ENCODE measurements at regions of chr10 and their contacts with region 1.

Region 1: DNA sequence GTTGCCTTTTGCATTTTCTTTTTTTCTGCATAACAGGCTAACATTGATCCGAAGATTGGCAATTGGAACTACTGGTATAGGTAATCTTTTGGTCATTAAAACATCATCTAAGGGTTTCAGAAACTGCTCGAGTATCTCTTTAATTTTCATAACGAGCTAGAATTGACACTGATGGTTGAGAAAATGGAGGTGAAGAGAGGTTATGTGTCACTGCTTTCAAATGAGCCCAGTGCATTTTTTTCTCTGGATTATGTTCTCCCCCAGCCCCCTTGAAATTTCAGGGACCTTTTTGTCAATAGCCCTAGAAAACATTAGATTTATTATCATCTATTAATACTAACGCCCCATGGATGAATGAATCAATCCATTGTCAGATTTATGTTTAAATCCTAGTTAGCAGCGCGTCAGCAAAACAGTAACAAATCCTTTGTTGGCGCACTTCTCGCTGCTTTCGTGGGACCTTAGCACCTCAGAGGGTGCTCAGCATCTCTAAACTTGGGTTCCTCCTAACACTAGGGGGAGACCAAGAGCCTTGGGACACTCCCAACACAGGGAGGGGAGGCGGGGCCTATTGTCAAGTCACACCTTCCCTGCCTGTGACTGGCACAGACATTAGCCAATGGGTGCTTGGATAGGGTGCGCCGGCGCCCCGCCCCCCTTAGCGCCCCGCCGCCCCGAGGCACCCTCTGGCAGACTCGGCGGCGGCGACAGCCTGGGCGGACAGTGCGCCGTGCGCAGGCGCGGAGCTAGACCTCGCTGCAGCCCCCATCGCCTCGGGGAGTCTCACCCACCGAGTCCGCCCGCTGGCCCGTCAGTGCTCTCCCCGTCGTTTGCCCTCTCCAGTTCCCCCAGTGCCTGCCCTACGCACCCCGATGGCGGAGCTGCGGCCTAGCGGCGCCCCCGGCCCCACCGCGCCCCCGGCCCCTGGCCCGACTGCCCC is at the start of gene SUFU:
- DNase-seq: peak; percentile 95 to 100
- ATAC-seq: peak; percentile 76 to 90 (median 76)
- H3K4me3 ChIP-seq: peak within 1 kb of the TSS; percentile 99
- H3K4me3 Mint-ChIP-seq: no peak within 1 kb of the TSS
- H3K27ac ChIP-seq: peak within 1 kb of the TSS; percentile 90
- H3K27ac Mint-ChIP-seq: no peak within 1 kb of the TSS
- H3K4me1 ChIP-seq: peaks cover 33% of the 10 kb centered on the region
- H3K4me1 Mint-ChIP-seq: peaks cover 25% of the 10 kb centered on the region in 2 donors
- H3K27me3 ChIP-seq: no peaks in the 10 kb centered on the region
- H3K27me3 Mint-ChIP-seq: no peaks in the 10 kb centered on the region
- CTCF ChIP-seq: peak; percentile 70
- total RNA-seq, gene SUFU: 8.2 to 13.0 (median 11.5) TPM

Region 2: GRCh38 chr10:102132563-102133372 is 370.8 kb before region 1 on chr10 and contains the start of gene PPRC1:
- intact Hi-C with region 1: loop called (anchors 1 kb)
- DNase-seq: peak; percentile 94 to 98
- ATAC-seq: peak; percentile 94 to 99 (median 96)
- H3K4me3 ChIP-seq: peak within 1 kb of the TSS; percentile 96
- H3K4me3 Mint-ChIP-seq: peak within 1 kb of the TSS; percentile 98
- H3K27ac ChIP-seq: peak within 1 kb of the TSS; percentile 86
- H3K27ac Mint-ChIP-seq: peak within 1 kb of the TSS; percentile 93 to 97
- H3K4me1 ChIP-seq: peaks cover 27% of the 10 kb centered on the region
- H3K4me1 Mint-ChIP-seq: peaks cover 33 to 37% of the 10 kb centered on the region in 2 donors
- H3K27me3 ChIP-seq: no peaks in the 10 kb centered on the region
- H3K27me3 Mint-ChIP-seq: no peaks in the 10 kb centered on the region
- CTCF ChIP-seq: peak; percentile 96
- total RNA-seq, gene PPRC1: 29.1 to 48.0 (median 37.7) TPM

Region 3: GRCh38 chr10:102245101-102245931 is 258.2 kb before region 1 on chr10 and contains the start of gene GBF1:
- intact Hi-C with region 1: loop called (anchors 1 kb)
- DNase-seq: peak; percentile 88 to 97
- ATAC-seq: peak; percentile 80 to 94 (median 84)
- H3K4me3 ChIP-seq: peak within 1 kb of the TSS; percentile 94
- H3K4me3 Mint-ChIP-seq: peak within 1 kb of the TSS; percentile 98
- H3K27ac ChIP-seq: peak within 1 kb of the TSS; percentile 89
- H3K27ac Mint-ChIP-seq: peak within 1 kb of the TSS; percentile 98 to 99
- H3K4me1 ChIP-seq: peaks cover 31% of the 10 kb centered on the region
- H3K4me1 Mint-ChIP-seq: peaks cover 47 to 60% of the 10 kb centered on the region in 2 donors
- H3K27me3 ChIP-seq: peaks cover 15% of the 10 kb centered on the region
- H3K27me3 Mint-ChIP-seq: peaks cover 7 to 19% of the 10 kb centered on the region in 2 donors
- CTCF ChIP-seq: no peak
- total RNA-seq, gene GBF1: 48.2 to 52.5 (median 50.9) TPM

Region 4: DNA sequence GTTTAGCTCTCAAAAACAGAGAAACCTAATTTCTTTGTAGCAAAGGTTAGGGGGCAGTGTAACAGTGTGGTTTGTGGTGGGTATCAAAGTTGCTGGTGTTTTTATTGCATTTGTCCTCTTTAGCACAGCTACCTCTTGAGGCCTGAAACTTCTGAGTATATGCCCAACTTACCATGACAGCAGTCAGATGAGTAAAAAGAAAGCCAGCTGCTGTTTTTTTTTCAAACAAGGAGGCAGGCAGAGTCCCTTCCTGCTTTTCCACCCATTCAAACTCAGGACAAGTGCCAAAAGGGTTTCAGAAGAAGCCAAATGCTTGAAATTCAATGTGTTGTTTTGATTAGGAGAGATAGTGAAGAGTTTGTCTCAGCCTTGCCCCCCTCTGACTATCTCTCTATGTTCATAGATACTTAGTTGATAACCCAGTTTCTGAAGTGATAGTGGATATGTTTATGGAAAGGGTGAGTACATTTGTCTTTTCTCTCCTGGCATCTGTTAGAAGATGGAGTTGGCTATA is 235.1 kb before region 1 on chr10:
- intact Hi-C with region 1: no loop called
- DNase-seq: no peak
- ATAC-seq: peak in 2 of 3 donors; percentile 46 to 73
- H3K4me3 ChIP-seq: no peak overlapping the region
- H3K4me3 Mint-ChIP-seq: no peak overlapping the region
- H3K27ac ChIP-seq: no peak overlapping the region
- H3K27ac Mint-ChIP-seq: peak overlapping the region; percentile 37 to 78
- H3K4me1 ChIP-seq: peaks cover 6% of the 10 kb centered on the region
- H3K4me1 Mint-ChIP-seq: peaks cover 50 to 54% of the 10 kb centered on the region in 2 donors
- H3K27me3 ChIP-seq: no peaks in the 10 kb centered on the region
- H3K27me3 Mint-ChIP-seq: no peaks in the 10 kb centered on the region
- CTCF ChIP-seq: no peak

Region 5: DNA sequence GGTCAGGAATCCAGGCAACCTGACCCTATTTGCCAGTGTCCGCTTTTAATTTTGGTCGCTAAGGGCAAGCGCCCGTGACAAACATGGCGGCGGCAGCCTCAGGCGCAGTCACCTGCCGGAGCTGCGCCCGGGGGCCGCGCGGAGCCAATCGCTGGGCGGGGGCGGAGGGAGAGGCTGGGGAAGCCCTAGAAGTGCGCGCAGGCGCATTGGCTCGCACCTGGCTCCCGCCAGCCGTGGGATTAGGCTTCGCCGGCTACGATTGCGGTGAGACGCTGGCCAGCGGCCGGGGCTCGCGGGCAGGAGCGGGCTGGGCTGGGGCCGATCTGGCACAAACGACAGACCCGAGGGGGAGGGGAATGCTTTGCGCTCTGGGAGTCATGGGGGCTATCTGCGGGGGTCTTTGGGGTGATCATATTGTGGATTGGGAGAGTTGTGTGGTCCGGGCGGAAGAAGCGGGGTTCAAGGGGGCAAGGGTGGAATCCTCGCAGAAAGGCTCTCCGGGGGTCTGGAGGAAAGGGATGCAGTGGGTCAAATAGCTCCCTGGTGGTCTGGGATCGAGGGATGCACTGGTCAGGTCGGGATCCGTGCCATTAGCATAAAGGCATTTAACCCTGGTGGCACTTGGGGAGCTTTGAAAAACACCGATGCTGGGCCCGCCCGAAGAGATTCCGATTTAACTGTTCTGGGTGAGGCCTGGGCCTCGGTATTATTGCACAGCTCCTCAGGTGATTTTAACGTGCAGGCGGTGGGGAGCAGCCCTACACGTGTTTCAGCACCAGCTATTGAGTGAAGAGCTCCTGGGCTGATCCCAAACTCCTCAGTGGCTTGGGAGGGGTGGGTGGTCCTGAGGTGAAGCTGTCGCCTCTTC is 42.1 kb before region 1 on chr10:
- intact Hi-C with region 1: loop called (anchors 2 kb)
- DNase-seq: peak; percentile 89 to 97
- ATAC-seq: peak; percentile 99 to 100 (median 100)
- H3K4me3 ChIP-seq: peak overlapping the region; percentile 77
- H3K4me3 Mint-ChIP-seq: peak overlapping the region; percentile 98
- H3K27ac ChIP-seq: peak overlapping the region; percentile 53
- H3K27ac Mint-ChIP-seq: peak overlapping the region; percentile 80 to 96
- H3K4me1 ChIP-seq: peaks cover 15% of the 10 kb centered on the region
- H3K4me1 Mint-ChIP-seq: peaks cover 22 to 26% of the 10 kb centered on the region in 2 donors
- H3K27me3 ChIP-seq: no peaks in the 10 kb centered on the region
- H3K27me3 Mint-ChIP-seq: peaks cover 0 to 2% of the 10 kb centered on the region in 2 donors
- CTCF ChIP-seq: no peak

Region 6: GRCh38 chr10:102641880-102642735 is 138.6 kb after region 1 on chr10:
- intact Hi-C with region 1: loop called (anchors 1 kb)
- DNase-seq: peak; percentile 95 to 98
- ATAC-seq: peak; percentile 69 to 91 (median 81)
- H3K4me3 ChIP-seq: peak overlapping the region; percentile 80
- H3K4me3 Mint-ChIP-seq: peak overlapping the region; percentile 96
- H3K27ac ChIP-seq: peak overlapping the region; percentile 95
- H3K27ac Mint-ChIP-seq: peak overlapping the region; percentile 92 to 97
- H3K4me1 ChIP-seq: peaks cover 26% of the 10 kb centered on the region
- H3K4me1 Mint-ChIP-seq: peaks cover 27 to 31% of the 10 kb centered on the region in 2 donors
- H3K27me3 ChIP-seq: no peaks in the 10 kb centered on the region
- H3K27me3 Mint-ChIP-seq: no peaks in the 10 kb centered on the region
- CTCF ChIP-seq: no peak

Region 7: DNA sequence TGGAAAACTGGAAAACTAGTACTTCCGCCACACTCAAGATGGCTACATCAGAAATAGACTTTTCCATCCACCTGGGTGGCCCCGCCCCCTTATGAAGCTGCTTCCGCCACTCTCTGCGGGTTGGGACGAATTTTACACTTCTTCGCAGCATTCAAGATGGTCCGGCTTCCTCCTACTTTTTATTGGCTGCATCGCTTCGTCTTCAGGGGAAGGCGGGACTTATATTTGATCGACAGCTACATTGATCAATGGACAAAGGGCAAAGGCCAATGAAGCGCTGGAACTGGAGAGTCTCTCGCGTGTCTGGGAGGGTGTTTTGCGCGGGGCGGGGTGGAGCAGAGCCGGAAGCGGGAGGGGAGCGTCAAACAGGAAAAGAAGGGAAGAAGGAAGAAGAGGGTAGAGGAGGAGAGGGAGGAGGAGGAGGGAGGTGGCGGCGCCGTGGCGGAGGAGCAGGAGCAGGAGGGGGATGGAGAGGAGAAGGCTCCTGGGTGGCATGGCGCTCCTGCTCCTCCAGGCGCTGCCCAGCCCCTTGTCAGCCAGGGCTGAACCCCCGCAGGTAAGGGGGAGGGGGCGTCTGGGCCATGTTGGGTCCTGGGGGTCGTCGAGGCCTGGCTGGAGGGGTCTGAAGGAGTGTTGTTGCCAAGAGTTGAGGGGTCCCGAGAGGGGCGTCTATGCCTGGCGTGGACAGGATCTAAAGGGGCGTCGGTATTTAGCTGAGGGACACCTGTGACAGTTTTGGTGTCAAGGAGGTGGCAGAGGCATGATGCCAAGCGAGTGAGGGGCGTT is 240.2 kb after region 1 on chr10 and contains the start of gene WBP1L:
- intact Hi-C with region 1: loop called (anchors 2 kb)
- DNase-seq: peak; percentile 92 to 99
- ATAC-seq: peak; percentile 96 to 99 (median 97)
- H3K4me3 ChIP-seq: peak within 1 kb of the TSS; percentile 85
- H3K4me3 Mint-ChIP-seq: peak within 1 kb of the TSS; percentile 93
- H3K27ac ChIP-seq: peak within 1 kb of the TSS; percentile 71
- H3K27ac Mint-ChIP-seq: peak within 1 kb of the TSS; percentile 78 to 86
- H3K4me1 ChIP-seq: peaks cover 16% of the 10 kb centered on the region
- H3K4me1 Mint-ChIP-seq: peaks cover 50 to 53% of the 10 kb centered on the region in 2 donors
- H3K27me3 ChIP-seq: no peaks in the 10 kb centered on the region
- H3K27me3 Mint-ChIP-seq: no peaks in the 10 kb centered on the region
- CTCF ChIP-seq: no peak
- total RNA-seq, gene WBP1L: 34.6 to 48.4 (median 47.9) TPM

Measured in natural killer cell (primary cell).